Mammary epithelial cell (primary cell): ENCODE measurements at regions of chr20 and their contacts with region 1.

Region 1: GRCh38 chr20:35359335-35359950 is 52.3 kb downstream of the UQCC1 start:
- DNase-seq: no peak
- H3K4me3 ChIP-seq: no peak overlapping the region
- H3K27ac ChIP-seq: no peak overlapping the region
- H3K4me1 ChIP-seq: peaks cover 39% of the 10 kb centered on the region
- H3K27me3 ChIP-seq: no peaks in the 10 kb centered on the region
- CTCF ChIP-seq: no peak

Region 2: DNA sequence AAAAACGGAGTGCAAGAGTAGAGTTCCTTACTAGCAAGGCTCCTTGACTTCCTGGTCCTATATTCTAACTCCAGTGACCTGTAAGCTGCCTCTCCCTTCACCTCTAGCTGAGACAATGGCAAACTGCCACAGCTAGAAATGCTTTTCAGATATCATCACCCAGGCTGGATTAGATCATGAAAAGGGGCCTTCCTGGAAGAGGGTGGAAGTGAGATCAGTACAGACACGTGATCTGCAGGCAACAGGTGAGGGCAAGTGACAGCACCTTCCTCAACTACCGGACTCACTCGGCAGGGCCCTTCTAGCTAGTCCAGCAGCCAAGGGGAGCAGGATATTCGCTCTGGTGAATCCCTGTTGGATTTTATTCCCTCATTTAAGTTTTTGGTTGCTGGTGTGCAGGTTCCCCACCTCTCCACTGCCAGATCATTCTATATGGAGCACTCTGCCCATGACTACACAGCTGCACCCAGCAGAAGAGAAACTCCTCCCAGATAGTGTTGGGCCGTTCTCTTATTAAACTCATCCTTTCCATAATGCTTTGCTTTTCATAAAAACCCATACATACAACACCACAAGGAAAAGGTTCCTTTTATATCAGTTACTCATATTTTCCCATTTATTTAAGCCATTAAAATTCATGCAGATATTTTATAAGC is 40.8 kb before region 1 on chr20:
- CTCF ChIA-PET with region 1: no interaction called
- dilution Hi-C with region 1: no loop called
- in situ Hi-C with region 1: no loop called
- intact Hi-C with region 1: no loop called
- DNase-seq: peak; percentile 98
- H3K4me3 ChIP-seq: no peak overlapping the region
- H3K27ac ChIP-seq: peak overlapping the region; percentile 73
- H3K4me1 ChIP-seq: peaks cover 46% of the 10 kb centered on the region
- H3K27me3 ChIP-seq: no peaks in the 10 kb centered on the region
- CTCF ChIP-seq: no peak

Region 3: DNA sequence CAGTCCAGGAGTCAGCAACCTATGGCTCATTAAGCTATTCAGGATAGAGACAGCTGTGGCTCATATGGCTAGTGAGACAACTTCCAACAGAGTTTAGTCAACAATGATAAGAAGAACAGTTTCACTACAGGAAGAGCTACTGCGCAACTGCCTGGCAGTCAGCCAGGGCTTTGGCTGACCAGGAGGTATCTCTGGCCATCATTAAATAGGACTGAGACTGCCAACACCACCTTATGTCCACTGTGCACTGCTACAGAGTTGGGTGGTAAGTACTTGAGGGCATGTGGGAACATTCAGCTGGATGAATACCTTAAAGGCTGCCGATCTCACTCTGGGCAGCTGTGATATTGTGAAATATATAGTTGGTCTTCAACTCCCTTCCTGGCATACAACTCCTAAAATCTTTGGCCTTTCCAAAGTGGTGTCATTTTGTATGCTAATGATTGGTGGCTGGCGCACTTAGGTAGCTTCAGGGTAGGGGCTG is 15.0 kb before region 1 on chr20:
- CTCF ChIA-PET with region 1: interaction called, 30 read pairs
- dilution Hi-C with region 1: no loop called
- in situ Hi-C with region 1: no loop called
- intact Hi-C with region 1: no loop called
- DNase-seq: peak; percentile 69
- H3K4me3 ChIP-seq: no peak overlapping the region
- H3K27ac ChIP-seq: no peak overlapping the region
- H3K4me1 ChIP-seq: peaks cover 35% of the 10 kb centered on the region
- H3K27me3 ChIP-seq: no peaks in the 10 kb centered on the region
- CTCF ChIP-seq: no peak